Lower leg skin (tissue), 4 donors: ENCODE measurements at regions of chr3 and their contacts with region 1.

Region 1: DNA sequence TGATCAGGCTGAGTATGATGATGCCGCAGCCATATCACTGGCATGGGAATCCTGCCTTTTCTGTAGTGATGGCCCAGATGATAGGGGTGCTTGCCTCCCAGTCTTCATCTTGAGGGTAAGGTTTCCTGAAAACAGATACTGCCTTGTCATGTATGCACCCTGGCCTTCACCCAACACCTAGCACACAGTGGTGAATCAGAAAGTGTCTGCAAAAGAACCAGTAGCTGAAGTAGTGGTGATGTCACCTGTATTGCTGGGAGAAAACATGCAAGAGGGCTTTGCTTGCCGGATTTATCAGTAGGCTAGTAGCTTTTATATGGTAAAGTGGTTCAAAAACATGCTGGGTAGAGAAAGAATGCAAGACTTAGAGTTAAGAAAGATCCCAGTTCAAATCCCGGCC is 419.8 kb upstream of the WNT5A start:
- DNase-seq: no peak
- H3K4me3 ChIP-seq: no peak overlapping the region
- CTCF ChIP-seq: no peak
- POLR2A ChIP-seq: no peak

Region 2: GRCh38 chr3:55860049-55860721 is 46.7 kb before region 1 on chr3:
- intact Hi-C with region 1: loop called (anchors 1 kb)
- DNase-seq: no peak
- H3K4me3 ChIP-seq: no peak overlapping the region
- CTCF ChIP-seq: no peak
- POLR2A ChIP-seq: no peak